Heart right ventricle (tissue), 16 donors: ENCODE measurements at regions of chr6 and their contacts with region 1.

Region 1: GRCh38 chr6:97282726-97283617 is at the start of gene MMS22L:
- DNase-seq: peak; percentile 93 to 95
- ATAC-seq: peak; percentile 99 to 100 (median 100)
- H3K4me3 ChIP-seq: peak within 1 kb of the TSS; percentile 73 to 99 (median 92)
- H3K27ac ChIP-seq: peak within 1 kb of the TSS in 9 of 10 donors; percentile 44 to 85 (median 57)
- H3K4me1 ChIP-seq: peaks cover 0 to 17% (median 9%) of the 10 kb centered on the region in 9 donors
- H3K27me3 ChIP-seq: no peaks in the 10 kb centered on the region
- CTCF ChIP-seq: no peak
- total RNA-seq, gene MMS22L: 1.6 to 5.1 (median 2.2) TPM

Region 2: GRCh38 chr6:96521644-96522464 is 761.1 kb before region 1 on chr6 and contains the start of gene UFL1:
- intact Hi-C with region 1: loop called in 1 of 10 experiments (anchors 5 kb)
- DNase-seq: peak; percentile 94
- ATAC-seq: peak; percentile 100
- H3K4me3 ChIP-seq: peak within 1 kb of the TSS; percentile 68 to 92 (median 83)
- H3K27ac ChIP-seq: peak within 1 kb of the TSS; percentile 82 to 98 (median 94)
- H3K4me1 ChIP-seq: peaks cover 0 to 34% (median 24%) of the 10 kb centered on the region in 9 donors
- H3K27me3 ChIP-seq: no peaks in the 10 kb centered on the region
- CTCF ChIP-seq: peak in 3 of 9 donors; percentile 24 to 32 (median 31)
- total RNA-seq, gene UFL1: 21.0 to 32.7 (median 26.0) TPM

Region 3: GRCh38 chr6:97361286-97361685 is 78.3 kb after region 1 on chr6:
- intact Hi-C with region 1: no loop called
- DNase-seq: no peak
- ATAC-seq: no peak
- H3K4me3 ChIP-seq: no peak overlapping the region
- H3K27ac ChIP-seq: no peak overlapping the region
- H3K4me1 ChIP-seq: no peaks in the 10 kb centered on the region
- H3K27me3 ChIP-seq: peaks cover 0 to 6% (median 0%) of the 10 kb centered on the region in 7 donors
- CTCF ChIP-seq: no peak